CD8-positive, alpha-beta T cell (primary cell): ENCODE measurements at regions of chr1 and their contacts with region 1.

Region 1: DNA sequence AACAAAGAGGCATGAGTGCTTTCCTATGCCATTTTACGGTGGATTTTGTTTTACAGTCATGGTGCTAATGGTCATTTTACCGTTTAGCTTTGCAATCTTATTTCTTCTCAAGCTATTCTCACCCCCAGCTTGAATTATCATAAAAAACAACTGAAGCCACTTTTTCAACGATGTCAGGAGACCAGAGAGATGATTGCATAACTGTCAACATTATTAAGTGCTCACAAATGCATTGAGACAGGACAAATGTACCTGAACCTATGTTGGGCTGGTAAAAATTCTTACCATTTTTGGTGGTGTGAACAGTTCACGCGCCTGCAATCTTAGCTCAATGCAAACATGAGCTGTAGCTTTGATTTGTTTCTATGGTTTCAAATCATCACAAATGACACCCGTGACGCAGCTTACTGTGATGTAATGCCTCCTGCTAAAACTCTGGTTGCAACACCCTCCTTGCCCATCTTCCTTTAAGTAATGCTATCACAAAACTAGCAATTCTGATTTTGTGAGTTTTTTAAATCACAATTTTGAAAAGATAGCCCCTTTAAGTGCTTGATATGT is 104.4 kb downstream of the UCHL5 start:
- DNase-seq: peak in 1 of 9 experiments; percentile 32
- ATAC-seq: no peak
- H3K4me3 ChIP-seq: no peak overlapping the region
- H3K4me3 Mint-ChIP-seq: no peak overlapping the region
- H3K27ac ChIP-seq: no peak overlapping the region
- H3K27ac Mint-ChIP-seq: no peak overlapping the region
- H3K4me1 ChIP-seq: no peaks in the 10 kb centered on the region
- H3K4me1 Mint-ChIP-seq: no peaks in the 10 kb centered on the region
- H3K27me3 ChIP-seq: no peaks in the 10 kb centered on the region
- H3K27me3 Mint-ChIP-seq: no peaks in the 10 kb centered on the region
- CTCF ChIP-seq: no peak

Region 2: DNA sequence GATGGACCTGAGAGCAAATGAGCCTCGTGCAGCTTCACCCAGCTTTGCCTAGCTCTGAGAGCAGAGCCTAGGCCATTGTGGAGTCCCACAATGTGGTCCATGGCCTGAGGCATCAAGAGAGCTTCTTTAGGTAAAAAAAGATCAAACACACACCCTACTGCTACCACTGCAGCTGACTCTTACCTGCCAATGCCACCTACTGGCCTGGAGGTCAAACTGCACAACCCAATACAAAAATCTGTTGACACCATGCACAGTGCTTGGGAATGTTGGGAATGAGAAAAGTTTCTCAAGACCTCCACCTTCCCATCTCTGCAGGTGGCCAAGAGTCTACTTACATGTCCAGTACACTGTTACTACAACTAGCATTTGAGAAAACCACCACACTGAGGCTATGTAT is 43.8 kb after region 1 on chr1:
- CTCF ChIA-PET with region 1: no interaction called
- POLR2A ChIA-PET with region 1: no interaction called
- intact Hi-C with region 1: loop called in 1 of 2 experiments (anchors 2 kb)
- DNase-seq: peak in 1 of 9 experiments; percentile 3
- ATAC-seq: no peak
- H3K4me3 ChIP-seq: no peak overlapping the region
- H3K4me3 Mint-ChIP-seq: no peak overlapping the region
- H3K27ac ChIP-seq: no peak overlapping the region
- H3K27ac Mint-ChIP-seq: no peak overlapping the region
- H3K4me1 ChIP-seq: no peaks in the 10 kb centered on the region
- H3K4me1 Mint-ChIP-seq: no peaks in the 10 kb centered on the region
- H3K27me3 ChIP-seq: no peaks in the 10 kb centered on the region
- H3K27me3 Mint-ChIP-seq: no peaks in the 10 kb centered on the region
- CTCF ChIP-seq: no peak